ENCODE measurements at regions of chr9 and their contacts with region 1.

Region 1: DNA sequence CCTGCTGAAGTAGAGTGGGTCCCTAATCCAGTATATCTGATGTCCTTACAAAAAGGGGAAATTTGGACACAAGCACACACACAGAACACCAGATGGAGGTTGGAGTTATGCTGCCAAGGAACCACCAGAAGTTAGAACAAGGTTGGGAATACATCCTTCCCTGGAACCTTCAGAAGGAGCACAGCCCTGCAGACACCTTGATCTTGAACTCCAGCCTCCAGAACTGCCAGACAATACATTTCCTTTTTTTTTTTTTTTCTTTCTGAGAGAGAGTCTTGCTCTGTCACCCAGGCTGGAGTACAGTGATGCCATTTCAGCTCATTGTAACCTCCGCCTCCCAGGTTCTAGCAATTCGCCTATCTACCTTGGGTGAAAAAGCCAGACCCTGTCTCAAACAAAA is 7.1 kb upstream of the ODF2 start:
- DNase-seq: no peak
- H3K4me3 ChIP-seq: no peak overlapping the region
- H3K27ac ChIP-seq: no peak overlapping the region
- H3K4me1 ChIP-seq: no peaks in the 10 kb centered on the region
- H3K27me3 ChIP-seq: no peaks in the 10 kb centered on the region
- CTCF ChIP-seq: no peak
- EP300 ChIP-seq: no peak
- POLR2A ChIP-seq: no peak

Region 2: DNA sequence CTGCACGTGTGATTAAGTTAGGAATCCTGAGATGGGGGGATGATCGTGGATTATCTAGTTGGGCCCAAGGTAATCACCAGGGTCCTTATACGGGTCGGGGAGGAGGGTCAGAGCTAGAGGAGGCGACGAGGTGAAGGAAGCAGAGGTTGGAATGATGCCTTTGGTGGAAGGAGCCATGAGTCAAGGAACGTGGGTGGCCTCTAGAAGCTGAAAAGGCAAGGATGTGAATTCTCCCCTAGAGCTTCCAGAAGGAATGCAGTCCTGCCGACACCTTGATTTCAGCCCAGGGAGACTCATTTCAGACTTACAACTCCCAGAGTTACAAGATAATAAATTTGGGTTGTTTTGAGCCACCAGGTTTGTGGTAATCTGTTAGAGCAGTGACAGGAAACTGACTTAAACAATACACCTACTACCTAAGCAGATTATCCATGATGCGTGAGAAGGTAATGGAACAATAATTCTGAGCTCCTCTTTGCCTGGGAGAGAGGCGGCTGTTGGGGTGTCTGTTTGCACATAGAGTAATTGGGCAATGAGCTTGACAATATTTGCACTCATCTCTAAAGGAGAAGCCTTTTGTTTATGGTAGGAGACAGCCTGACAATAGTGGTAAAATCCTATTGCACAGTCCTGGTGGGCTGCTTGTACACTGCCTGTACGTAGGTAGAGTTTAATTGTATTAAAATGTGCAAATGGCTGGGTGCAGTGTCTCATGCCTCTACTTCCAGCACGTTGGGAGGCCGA is 858.7 kb after region 1 on chr9:
- intact Hi-C with region 1: no loop called
- DNase-seq: peak in 2 of 5 donors; percentile 4 to 6
- H3K4me3 ChIP-seq: no peak overlapping the region
- H3K27ac ChIP-seq: no peak overlapping the region
- H3K4me1 ChIP-seq: no peaks in the 10 kb centered on the region
- H3K27me3 ChIP-seq: no peaks in the 10 kb centered on the region
- CTCF ChIP-seq: no peak
- EP300 ChIP-seq: no peak
- POLR2A ChIP-seq: no peak

Region 3: GRCh38 chr9:129377931-129378695 is 929.4 kb after region 1 on chr9:
- intact Hi-C with region 1: loop called in 1 of 4 experiments (anchors 5 kb)
- DNase-seq: no peak
- H3K4me3 ChIP-seq: no peak overlapping the region
- H3K27ac ChIP-seq: no peak overlapping the region
- H3K4me1 ChIP-seq: peaks cover 4% of the 10 kb centered on the region
- H3K27me3 ChIP-seq: no peaks in the 10 kb centered on the region
- CTCF ChIP-seq: no peak
- EP300 ChIP-seq: no peak
- POLR2A ChIP-seq: no peak